Heart right ventricle (tissue), 16 donors: ENCODE measurements at regions of chr3 and their contacts with region 1.

Region 1: DNA sequence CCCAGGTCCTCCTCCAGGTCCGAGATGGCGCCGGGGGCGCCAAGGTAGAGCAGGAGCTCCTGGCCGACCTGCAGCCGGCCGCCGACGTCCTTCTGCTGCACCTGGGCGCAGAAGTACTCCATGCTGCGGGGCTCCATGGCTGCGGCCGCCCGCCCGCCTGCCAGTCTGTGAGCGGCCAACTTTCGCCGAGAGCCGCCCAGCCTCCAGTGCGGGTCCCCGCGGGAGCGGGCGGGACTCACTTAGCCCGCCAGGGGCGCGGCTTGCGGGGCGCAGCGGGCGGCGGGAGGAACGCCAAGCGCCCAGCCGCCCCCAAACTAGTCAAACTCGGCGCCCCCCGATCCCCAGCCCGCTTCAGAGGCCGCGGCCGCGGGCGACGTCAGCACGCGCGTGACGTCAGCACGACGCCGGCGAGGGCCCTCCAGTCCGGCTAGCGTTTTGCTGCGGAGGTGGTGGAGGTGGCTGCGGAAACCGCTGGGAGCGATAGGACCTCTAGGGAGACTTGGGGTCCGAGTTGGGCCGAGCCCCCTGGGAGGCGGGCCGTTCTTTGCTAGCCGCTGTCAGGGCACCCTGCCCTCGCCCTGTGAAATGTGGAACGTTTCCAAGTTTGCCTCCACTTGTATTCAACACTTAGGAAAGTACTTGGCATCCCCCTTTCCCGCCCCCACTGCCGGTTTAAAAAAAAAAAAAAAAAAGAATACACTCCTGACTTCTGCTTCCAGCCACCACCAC is at the start of gene CLASP2:
- DNase-seq: peak; percentile 89 to 91
- ATAC-seq: peak; percentile 95 to 98 (median 97)
- H3K4me3 ChIP-seq: peak within 1 kb of the TSS; percentile 67 to 96 (median 89)
- H3K27ac ChIP-seq: peak within 1 kb of the TSS; percentile 81 to 99 (median 98)
- H3K4me1 ChIP-seq: peaks cover 0 to 44% (median 16%) of the 10 kb centered on the region in 9 donors
- H3K27me3 ChIP-seq: no peaks in the 10 kb centered on the region
- CTCF ChIP-seq: peak in 3 of 9 donors; percentile 2 to 31 (median 14)
- total RNA-seq, gene CLASP2: 70.1 to 107 (median 88.7) TPM

Region 2: GRCh38 chr3:33440323-33441232 is 277.5 kb before region 1 on chr3 and contains the start of gene UBP1:
- intact Hi-C with region 1: loop called in 2 of 10 experiments (anchors 5 kb)
- DNase-seq: peak; percentile 99 to 100
- ATAC-seq: peak; percentile 92 to 99 (median 97)
- H3K4me3 ChIP-seq: peak within 1 kb of the TSS; percentile 71 to 89 (median 85)
- H3K27ac ChIP-seq: peak within 1 kb of the TSS; percentile 80 to 99 (median 95)
- H3K4me1 ChIP-seq: peaks cover 2 to 47% (median 39%) of the 10 kb centered on the region in 9 donors
- H3K27me3 ChIP-seq: no peaks in the 10 kb centered on the region
- CTCF ChIP-seq: peak in 3 of 9 donors; percentile 5 to 17 (median 9)
- total RNA-seq, gene UBP1: 33.2 to 51.7 (median 42.3) TPM

Region 3: DNA sequence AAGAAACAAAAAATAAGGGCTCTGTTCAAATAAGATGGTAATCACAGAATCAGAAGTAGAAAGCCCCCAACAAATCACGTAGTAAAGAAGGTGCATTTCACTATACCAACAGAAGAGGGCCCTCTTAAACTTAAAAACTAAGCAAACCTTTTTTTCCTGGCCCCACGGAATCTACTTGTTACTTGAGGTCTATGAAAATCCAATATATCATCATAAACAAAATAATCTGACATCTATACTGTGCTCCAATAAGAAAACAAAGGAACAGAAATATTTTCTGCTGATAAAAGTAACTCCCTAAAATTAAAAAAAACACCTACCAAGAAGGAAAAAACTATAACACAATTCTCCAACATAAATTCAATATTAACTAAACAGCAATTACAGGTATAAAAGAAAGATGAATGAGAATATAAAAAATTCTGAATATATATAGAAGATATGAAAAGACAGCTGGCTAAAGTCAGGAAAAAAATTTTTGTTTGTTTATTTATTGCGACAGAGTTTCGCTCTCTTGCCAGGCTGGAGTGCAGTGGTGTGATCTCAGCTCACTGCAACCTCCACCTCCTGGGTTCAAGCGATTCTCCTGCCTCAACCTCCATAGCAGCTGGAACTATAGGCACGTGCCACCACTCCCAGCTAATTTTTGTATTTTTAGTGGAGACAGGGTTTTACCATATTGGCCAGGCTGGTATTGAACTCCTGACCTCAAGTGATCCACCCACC is 81.7 kb before region 1 on chr3:
- intact Hi-C with region 1: loop called in 9 of 10 experiments (anchors 1 to 5 kb)
- DNase-seq: no peak
- ATAC-seq: no peak
- H3K4me3 ChIP-seq: no peak overlapping the region
- H3K27ac ChIP-seq: no peak overlapping the region
- H3K4me1 ChIP-seq: no peaks in the 10 kb centered on the region
- H3K27me3 ChIP-seq: no peaks in the 10 kb centered on the region
- CTCF ChIP-seq: peak; percentile 23 to 79 (median 64)

Region 4: DNA sequence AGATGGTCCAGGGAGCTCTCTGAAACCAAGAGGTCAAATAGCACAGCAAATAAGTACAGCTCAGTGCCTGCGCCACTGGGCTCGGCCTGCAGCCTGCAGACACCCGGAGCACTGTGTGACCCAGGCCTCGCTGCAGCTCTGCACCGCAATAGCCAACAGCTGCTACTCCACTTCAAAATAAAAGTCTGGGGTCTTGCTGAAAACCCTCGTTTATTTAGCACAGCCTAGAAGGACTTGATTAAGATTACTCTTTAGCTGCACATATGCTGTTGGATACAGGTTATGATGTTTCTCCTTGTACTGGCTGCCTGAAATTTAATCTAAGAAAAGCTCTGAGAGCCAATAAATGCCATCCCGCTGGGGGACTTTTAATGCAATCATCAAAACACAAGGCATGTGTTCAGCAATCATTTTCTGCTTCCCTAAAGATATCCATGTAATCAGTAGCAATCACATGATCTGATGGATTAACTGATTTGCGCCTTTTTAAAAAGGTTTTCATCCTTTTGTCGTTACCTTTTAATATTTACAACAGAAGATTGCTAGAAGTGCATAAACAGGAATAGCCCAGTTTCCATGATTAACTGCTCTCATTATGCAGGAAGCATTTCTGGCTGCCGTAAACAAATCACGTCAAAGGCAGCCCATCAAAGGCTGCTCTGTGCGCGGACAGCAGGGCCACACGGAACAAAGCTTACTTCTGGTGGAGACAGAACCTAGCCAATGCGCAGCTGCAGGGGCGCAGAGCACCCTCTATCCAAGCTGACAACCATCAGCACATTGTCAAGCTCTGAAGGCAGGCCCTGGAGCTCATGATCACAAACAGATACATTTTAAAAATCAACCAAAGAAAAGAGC is 58.8 kb before region 1 on chr3:
- intact Hi-C with region 1: loop called in 5 of 10 experiments (anchors 2 to 10 kb)
- DNase-seq: peak; percentile 79 to 80
- ATAC-seq: peak; percentile 95 to 99 (median 98)
- H3K4me3 ChIP-seq: peak overlapping the region; percentile 15 to 67 (median 56)
- H3K27ac ChIP-seq: peak overlapping the region; percentile 69 to 85 (median 82)
- H3K4me1 ChIP-seq: peaks cover 3 to 49% (median 36%) of the 10 kb centered on the region in 9 donors
- H3K27me3 ChIP-seq: no peaks in the 10 kb centered on the region
- CTCF ChIP-seq: no peak

Region 5: DNA sequence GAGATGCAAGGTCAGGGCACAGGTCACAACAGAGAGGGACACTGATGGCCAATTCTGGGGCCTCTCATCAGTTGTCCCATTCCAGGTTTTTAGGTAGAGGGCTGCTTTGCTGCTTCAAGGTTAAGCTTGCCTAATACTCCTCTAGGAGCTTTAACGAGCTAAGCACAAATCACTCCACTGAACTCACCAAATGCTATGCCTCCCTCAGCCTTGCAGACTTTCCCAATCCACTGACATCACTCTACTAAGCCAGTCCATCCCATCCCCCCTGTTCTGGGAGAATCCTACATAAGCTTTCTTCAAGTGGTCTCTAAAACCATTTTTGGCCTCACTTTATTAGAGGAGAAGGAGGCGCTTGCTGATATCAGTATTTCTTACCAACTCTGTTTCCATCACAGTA is 55.6 kb after region 1 on chr3:
- intact Hi-C with region 1: loop called in 1 of 10 experiments (anchors 5 kb)
- DNase-seq: no peak
- ATAC-seq: no peak
- H3K4me3 ChIP-seq: no peak overlapping the region
- H3K27ac ChIP-seq: no peak overlapping the region
- H3K4me1 ChIP-seq: no peaks in the 10 kb centered on the region
- H3K27me3 ChIP-seq: no peaks in the 10 kb centered on the region
- CTCF ChIP-seq: no peak

Region 6: GRCh38 chr3:33787328-33788009 is 69.4 kb after region 1 on chr3:
- intact Hi-C with region 1: loop called in 3 of 10 experiments (anchors 5 to 10 kb)
- DNase-seq: peak in 1 of 2 donors; percentile 57
- ATAC-seq: peak; percentile 71 to 93 (median 85)
- H3K4me3 ChIP-seq: peak overlapping the region in 7 of 10 donors; percentile 11 to 43 (median 35)
- H3K27ac ChIP-seq: no peak overlapping the region
- H3K4me1 ChIP-seq: peaks cover 0 to 9% (median 0%) of the 10 kb centered on the region in 9 donors
- H3K27me3 ChIP-seq: no peaks in the 10 kb centered on the region
- CTCF ChIP-seq: peak; percentile 58 to 91 (median 79)

Region 7: DNA sequence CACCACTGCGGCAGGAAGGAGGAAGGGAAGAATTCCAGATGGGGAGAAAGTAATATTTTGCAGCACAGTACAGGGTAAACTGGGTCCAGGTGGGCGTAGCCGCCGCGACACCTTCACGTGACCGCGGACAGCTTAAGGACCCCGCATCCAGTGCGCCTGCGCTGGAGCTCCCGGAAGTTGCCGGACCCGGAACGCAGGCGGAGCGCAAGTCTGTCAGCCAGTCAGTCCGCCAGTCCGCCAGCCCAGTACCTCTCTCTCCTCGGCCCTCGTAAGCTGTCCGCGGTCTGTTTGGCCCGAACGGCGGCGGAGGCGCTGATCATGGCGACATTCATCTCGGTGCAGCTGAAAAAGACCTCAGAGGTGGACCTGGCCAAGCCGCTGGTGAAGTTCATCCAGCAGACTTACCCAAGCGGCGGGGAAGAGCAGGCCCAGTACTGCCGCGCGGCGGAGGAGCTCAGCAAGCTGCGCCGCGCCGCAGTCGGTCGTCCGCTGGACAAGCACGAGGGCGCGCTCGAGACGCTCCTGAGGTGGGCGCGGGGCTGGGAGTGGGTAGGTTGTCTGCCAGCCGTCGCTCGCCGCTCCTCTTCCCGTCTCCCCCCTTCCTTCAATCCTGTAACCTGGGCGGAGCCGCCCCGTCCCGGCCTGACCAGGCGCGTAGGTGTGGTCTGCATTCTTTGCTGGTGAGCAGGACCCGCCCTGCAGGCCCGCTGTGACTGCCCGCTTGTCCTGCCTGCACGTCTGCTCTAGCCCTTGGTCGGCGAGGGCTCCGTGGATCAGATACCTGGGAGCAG is 80.6 kb after region 1 on chr3 and contains the start of gene PDCD6IP:
- intact Hi-C with region 1: loop called in 4 of 10 experiments (anchors 5 kb)
- DNase-seq: peak; percentile 92 to 94
- ATAC-seq: peak; percentile 93 to 98 (median 96)
- H3K4me3 ChIP-seq: peak within 1 kb of the TSS; percentile 59 to 96 (median 81)
- H3K27ac ChIP-seq: peak within 1 kb of the TSS; percentile 77 to 98 (median 94)
- H3K4me1 ChIP-seq: peaks cover 0 to 55% (median 39%) of the 10 kb centered on the region in 9 donors
- H3K27me3 ChIP-seq: no peaks in the 10 kb centered on the region
- CTCF ChIP-seq: peak in 4 of 9 donors; percentile 30 to 49 (median 33)
- total RNA-seq, gene PDCD6IP: 133 to 185 (median 157) TPM

Region 8: DNA sequence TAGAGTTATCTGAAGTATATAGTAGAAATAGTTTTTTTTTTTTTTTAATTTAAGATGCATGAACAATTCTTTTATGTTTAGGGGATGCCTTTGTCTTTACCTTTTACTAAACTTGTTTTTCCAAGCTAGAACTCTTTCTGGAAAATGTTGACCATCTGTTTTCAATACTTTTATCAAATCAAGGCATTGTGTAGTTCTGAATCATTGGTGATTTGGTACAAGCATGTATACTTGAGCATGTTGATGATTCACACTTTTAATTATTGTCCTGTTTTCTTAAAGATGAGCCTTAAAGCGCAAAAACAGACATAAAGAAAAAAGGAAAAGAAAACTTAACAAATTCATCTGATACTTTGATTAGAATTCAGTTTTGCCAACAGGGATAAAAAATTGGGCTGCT is 108.7 kb after region 1 on chr3:
- intact Hi-C with region 1: no loop called
- DNase-seq: no peak
- ATAC-seq: no peak
- H3K4me3 ChIP-seq: no peak overlapping the region
- H3K27ac ChIP-seq: no peak overlapping the region
- H3K4me1 ChIP-seq: peaks cover 0 to 13% (median 3%) of the 10 kb centered on the region in 9 donors
- H3K27me3 ChIP-seq: no peaks in the 10 kb centered on the region
- CTCF ChIP-seq: no peak